GM13977 (cell line): ENCODE measurements at regions of chr5 and their contacts with region 1.

Region 1: DNA sequence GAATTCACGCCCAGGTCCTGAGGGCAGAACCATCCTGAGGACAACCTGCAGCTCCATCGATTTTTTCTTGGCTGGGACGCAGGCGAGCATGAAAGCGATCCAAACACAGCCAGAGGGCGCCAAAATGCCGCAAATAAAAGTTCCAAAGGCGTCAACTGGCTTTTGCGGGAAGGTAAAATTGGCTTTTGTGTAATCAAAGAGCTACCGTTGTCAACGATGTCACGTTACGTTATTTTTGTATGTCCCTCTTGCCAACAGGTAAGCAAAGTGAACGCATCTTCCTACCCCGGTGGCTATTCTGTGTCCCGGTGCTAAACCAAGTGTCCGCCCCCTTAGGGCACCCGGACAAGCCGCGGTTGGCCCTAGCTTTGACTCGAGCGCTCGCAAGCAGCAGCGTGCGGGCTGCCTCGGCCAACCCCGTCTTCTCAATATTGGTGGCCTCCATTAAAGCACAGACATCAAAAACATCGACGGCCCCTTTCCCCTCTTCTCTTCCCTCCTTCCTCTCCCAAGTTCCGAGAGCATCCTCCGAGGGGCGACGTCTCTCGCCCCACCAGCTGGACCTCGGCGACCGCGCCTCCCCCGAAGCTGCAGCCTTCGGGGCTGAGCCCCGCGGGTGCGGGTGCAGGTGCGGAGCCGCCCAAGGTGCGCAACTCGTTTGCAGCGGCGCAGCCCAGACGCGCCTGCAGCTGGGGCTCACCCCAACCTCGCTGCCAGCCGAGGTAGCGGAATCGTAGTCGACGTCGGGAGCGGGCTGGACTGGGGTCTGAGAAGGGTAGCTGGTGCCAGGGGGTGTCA is 1.1 kb upstream of the BASP1 start:
- DNase-seq: peak; percentile 75
- CTCF ChIP-seq: peak; percentile 87

Region 2: GRCh38 chr5:17037751-17038150 is 178.6 kb before region 1 on chr5:
- in situ Hi-C with region 1: no loop called
- DNase-seq: no peak
- CTCF ChIP-seq: no peak

Region 3: GRCh38 chr5:17276445-17276844 is 60.1 kb after region 1 on chr5:
- in situ Hi-C with region 1: loop called (anchors 10 kb)
- DNase-seq: peak; percentile 82
- CTCF ChIP-seq: no peak

Region 4: DNA sequence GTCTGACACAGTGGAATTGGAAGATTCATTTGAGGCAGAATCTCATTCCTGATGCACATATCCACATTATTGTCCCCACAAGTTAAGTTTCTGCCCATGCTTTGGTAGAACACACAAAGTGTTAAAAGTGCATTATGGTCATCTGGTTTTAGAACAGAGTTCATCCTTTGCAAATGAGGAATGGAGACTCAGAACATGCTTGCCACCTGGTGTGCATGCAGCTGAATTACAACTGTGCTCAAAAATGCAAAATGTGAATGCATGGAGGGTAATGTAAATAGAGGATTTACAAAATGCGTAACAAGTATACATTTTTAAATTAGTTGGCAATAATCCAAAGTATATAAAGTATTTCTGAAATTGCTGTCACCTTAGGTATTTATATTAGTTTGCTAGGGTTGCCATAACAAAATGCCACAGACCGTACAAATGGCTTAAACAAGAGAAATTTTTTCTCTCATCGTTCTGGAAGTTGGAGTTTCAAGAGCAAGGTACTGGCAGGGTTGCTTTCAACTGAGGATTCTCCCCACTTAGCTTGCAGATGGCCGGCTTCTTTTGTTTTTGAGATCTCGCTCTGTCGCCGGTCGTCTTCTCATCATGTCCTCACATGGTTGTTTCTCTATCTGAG is 1089.0 kb after region 1 on chr5:
- in situ Hi-C with region 1: loop called (anchors 10 kb)
- DNase-seq: peak; percentile 60
- CTCF ChIP-seq: peak; percentile 84